GM12878 (cell line): ENCODE measurements at regions of chr3 and their contacts with region 1.

Region 1: DNA sequence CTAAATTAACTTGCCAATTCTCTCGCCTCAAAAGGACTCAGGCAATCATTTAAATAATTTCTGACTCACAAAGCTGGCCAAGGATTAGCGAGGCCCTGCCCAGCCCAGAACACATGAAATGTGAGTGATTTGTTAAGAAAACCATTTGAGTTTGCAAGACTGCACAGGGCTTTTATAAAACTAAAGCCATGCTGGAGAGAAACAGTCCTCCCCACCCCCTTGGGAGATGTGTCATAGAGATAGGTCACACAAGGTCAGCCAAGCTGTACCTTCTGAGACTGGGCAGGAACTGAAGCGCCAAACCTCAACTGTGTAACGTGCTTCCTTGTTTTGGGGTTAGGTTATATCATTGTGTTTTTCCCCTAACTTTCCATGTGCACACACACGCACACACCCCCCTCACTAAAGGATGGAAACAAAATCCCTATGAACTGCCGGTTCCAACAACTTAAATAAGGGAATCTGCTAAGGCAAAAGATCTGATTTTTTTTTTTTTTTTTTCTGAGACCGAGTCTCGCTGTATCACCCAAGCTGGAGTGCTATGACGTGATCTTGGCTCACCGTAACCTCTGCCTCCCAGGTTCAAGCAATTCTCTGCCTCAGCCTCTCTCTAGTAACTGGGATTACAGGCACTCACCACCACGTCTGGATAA is 8.1 kb downstream of the SPATA12 start:
- DNase-seq: peak; percentile 95
- ATAC-seq: peak; percentile 97
- H3K4me3 ChIP-seq: no peak overlapping the region
- H3K27ac ChIP-seq: peak overlapping the region; percentile 8; the same call in 1 of the 2 replicates
- H3K4me1 ChIP-seq: peaks cover 4% of the 10 kb centered on the region
- H3K27me3 ChIP-seq: no peaks in the 10 kb centered on the region
- CTCF ChIP-seq: no peak
- EP300 ChIP-seq: peak; percentile 97 to 98
- POLR2A ChIP-seq: no peak
- RAD21 ChIP-seq: peak; percentile 13; the same call in 1 of the 2 replicates

Region 2: GRCh38 chr3:57047974-57048671 is 20.4 kb before region 1 on chr3:
- CTCF ChIA-PET with region 1: no interaction called
- POLR2A ChIA-PET with region 1: interaction called, 3 read pairs
- RAD21 ChIA-PET with region 1: no interaction called
- SMC1A ChIA-PET with region 1: interaction called, 7 read pairs
- in situ Hi-C with region 1: no loop called
- intact Hi-C with region 1: loop called (anchors 2 kb)
- DNase-seq: no peak
- ATAC-seq: no peak
- H3K4me3 ChIP-seq: no peak overlapping the region
- H3K27ac ChIP-seq: no peak overlapping the region
- H3K4me1 ChIP-seq: peaks cover 11% of the 10 kb centered on the region
- H3K27me3 ChIP-seq: no peaks in the 10 kb centered on the region
- CTCF ChIP-seq: no peak
- EP300 ChIP-seq: no peak
- POLR2A ChIP-seq: no peak
- RAD21 ChIP-seq: no peak